ENCODE measurements at regions of chr2 and their contacts with region 1.

Region 1: GRCh38 chr2:9630749-9631483 is at the start of gene YWHAQ:
- DNase-seq: peak; percentile 98
- H3K4me3 Mint-ChIP-seq: peak within 1 kb of the TSS; percentile 97
- H3K27ac Mint-ChIP-seq: peak within 1 kb of the TSS; percentile 95
- H3K4me1 Mint-ChIP-seq: peaks cover 45% of the 10 kb centered on the region
- H3K27me3 Mint-ChIP-seq: no peaks in the 10 kb centered on the region
- total RNA-seq, gene YWHAQ: 495 to 541 TPM

Region 2: GRCh38 chr2:9474361-9474967 is 156.5 kb before region 1 on chr2 and contains the start of gene IAH1:
- CTCF ChIA-PET with region 1: interaction called, 3 read pairs
- POLR2A ChIA-PET with region 1: interaction called, 3 read pairs
- intact Hi-C with region 1: loop called (anchors 2 kb)
- DNase-seq: peak; percentile 77
- H3K4me3 Mint-ChIP-seq: peak within 1 kb of the TSS; percentile 79
- H3K27ac Mint-ChIP-seq: peak within 1 kb of the TSS; percentile 76
- H3K4me1 Mint-ChIP-seq: peaks cover 43% of the 10 kb centered on the region
- H3K27me3 Mint-ChIP-seq: no peaks in the 10 kb centered on the region
- total RNA-seq, gene IAH1: 83.3 to 87.1 TPM

Region 3: DNA sequence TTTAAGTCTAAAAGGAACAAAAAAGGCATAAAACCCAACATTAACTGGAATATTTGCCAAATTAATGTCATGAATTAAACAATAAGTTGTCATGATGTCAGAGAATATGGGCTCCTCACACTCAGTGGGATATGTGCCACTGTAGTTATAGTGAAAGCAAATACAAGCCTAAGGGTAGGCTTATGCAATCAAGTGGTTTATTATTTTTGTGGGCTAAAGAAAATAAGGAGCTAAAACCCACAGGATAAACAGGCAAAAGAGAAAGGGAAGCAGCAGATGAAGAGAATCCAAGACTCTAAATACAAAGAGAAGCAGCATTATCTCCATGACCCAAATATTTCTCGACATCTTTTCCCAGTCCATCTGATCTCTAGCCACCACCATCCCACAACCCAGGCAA is 17.6 kb before region 1 on chr2:
- CTCF ChIA-PET with region 1: interaction called, 14 read pairs
- POLR2A ChIA-PET with region 1: interaction called, 21 read pairs
- intact Hi-C with region 1: loop called (anchors 1 kb)
- DNase-seq: no peak
- H3K4me3 Mint-ChIP-seq: no peak overlapping the region
- H3K27ac Mint-ChIP-seq: no peak overlapping the region
- H3K4me1 Mint-ChIP-seq: peaks cover 90% of the 10 kb centered on the region
- H3K27me3 Mint-ChIP-seq: no peaks in the 10 kb centered on the region

Region 4: GRCh38 chr2:9656270-9656766 is 25.4 kb after region 1 on chr2:
- CTCF ChIA-PET with region 1: interaction called, 3 read pairs
- POLR2A ChIA-PET with region 1: interaction called, 28 read pairs
- intact Hi-C with region 1: loop called (anchors 1 kb)
- DNase-seq: peak; percentile 90
- H3K4me3 Mint-ChIP-seq: peak overlapping the region; percentile 40
- H3K27ac Mint-ChIP-seq: peak overlapping the region; percentile 94
- H3K4me1 Mint-ChIP-seq: peaks cover 43% of the 10 kb centered on the region
- H3K27me3 Mint-ChIP-seq: peaks cover 9% of the 10 kb centered on the region

Region 5: GRCh38 chr2:9753276-9753600 is 122.3 kb after region 1 on chr2:
- CTCF ChIA-PET with region 1: interaction called, 5 read pairs
- POLR2A ChIA-PET with region 1: interaction called, 28 read pairs
- intact Hi-C with region 1: loop called (anchors 1 kb)
- DNase-seq: peak; percentile 90
- H3K4me3 Mint-ChIP-seq: peak overlapping the region; percentile 68
- H3K27ac Mint-ChIP-seq: peak overlapping the region; percentile 91
- H3K4me1 Mint-ChIP-seq: peaks cover 70% of the 10 kb centered on the region
- H3K27me3 Mint-ChIP-seq: no peaks in the 10 kb centered on the region

Region 6: DNA sequence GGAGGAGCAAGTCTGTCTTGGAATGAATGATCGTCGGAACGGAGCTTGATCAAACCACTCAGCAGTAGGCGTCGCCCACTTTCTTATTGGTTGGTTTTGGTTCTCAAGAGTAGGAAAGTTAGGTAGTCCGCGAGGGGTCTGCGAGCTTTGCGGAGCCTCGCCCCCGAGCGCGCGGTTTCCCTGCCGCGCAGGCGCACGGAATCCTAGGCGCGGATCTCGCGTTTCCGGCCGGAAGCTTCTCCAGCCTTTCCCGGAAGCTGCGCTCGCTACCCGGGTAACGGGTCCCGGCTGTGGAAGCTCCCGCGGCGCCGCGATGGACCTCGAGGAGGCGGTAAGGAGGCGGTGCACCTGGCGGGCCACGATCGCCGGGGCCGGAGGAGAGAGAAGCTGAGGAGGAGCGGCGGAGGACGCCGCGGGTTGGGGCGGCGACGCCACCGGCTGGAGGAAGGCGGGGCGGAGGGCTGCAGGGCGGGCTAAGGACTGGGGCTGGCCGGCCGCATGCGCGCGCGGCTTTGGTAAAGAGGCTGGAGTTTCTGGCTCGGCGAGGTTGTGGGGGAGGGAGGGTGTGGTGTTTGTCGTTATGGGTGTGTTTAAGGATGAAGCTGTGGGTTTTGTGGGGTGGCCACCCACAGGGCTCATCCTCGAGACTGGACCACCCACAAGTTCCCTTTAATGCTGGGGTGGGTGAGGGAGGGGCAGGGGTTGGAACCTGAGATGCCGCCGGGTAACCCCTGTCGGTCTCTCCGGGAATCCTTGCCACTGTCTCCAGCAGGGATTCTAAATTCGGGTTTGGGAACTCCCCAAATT is 212.5 kb after region 1 on chr2 and contains the start of gene TAF1B:
- CTCF ChIA-PET with region 1: no interaction called
- POLR2A ChIA-PET with region 1: interaction called, 8 read pairs
- intact Hi-C with region 1: loop called (anchors 1 kb)
- DNase-seq: peak; percentile 92
- H3K4me3 Mint-ChIP-seq: peak within 1 kb of the TSS; percentile 91
- H3K27ac Mint-ChIP-seq: peak within 1 kb of the TSS; percentile 89
- H3K4me1 Mint-ChIP-seq: peaks cover 42% of the 10 kb centered on the region
- H3K27me3 Mint-ChIP-seq: no peaks in the 10 kb centered on the region
- total RNA-seq, gene TAF1B: 32.6 TPM

Region 7: GRCh38 chr2:9909106-9909505 is 278.2 kb after region 1 on chr2:
- CTCF ChIA-PET with region 1: no interaction called
- POLR2A ChIA-PET with region 1: no interaction called
- intact Hi-C with region 1: no loop called
- DNase-seq: no peak
- H3K4me3 Mint-ChIP-seq: no peak overlapping the region
- H3K27ac Mint-ChIP-seq: no peak overlapping the region
- H3K4me1 Mint-ChIP-seq: peaks cover 2% of the 10 kb centered on the region
- H3K27me3 Mint-ChIP-seq: no peaks in the 10 kb centered on the region

Region 8: DNA sequence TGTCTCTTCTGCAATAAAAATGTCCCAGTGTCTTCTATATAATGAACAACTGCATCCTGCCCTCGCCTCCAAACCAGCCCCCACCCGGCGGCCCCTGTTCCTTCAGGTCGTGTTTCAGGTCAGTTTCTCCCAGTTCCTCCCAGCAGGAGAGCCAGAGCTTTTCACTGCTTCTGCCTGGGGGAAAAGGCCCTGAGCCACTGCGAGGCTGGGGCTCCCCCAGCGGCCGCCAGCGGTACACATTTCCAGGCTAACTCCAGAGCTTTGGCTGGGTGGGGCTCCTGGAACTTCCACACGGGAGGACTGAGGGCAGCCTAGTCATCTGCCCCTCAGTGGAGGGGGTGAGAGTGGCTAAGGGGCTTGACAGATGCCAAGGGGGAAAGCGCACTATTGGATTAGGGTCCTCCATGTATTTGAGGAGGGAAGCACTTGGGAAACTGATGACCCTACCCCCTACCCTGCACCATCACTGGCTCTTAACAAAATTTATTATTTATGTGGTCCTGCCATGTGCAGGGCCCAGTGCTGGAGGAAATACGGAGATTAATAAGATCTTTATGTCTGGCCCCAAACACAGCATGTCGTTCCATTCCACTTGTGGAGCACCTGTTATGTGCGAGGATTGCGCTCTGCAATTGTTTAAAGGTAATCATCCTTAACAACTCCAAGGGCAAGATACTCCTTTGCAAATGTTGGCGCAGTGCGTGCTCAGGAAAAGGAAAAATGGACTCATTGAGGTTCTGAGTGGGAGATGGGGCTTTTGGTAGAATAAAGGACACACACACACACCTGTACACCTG is 466.6 kb after region 1 on chr2:
- CTCF ChIA-PET with region 1: no interaction called
- POLR2A ChIA-PET with region 1: no interaction called
- intact Hi-C with region 1: no loop called
- DNase-seq: peak; percentile 50
- H3K4me3 Mint-ChIP-seq: no peak overlapping the region
- H3K27ac Mint-ChIP-seq: no peak overlapping the region
- H3K4me1 Mint-ChIP-seq: no peaks in the 10 kb centered on the region
- H3K27me3 Mint-ChIP-seq: peaks cover 21% of the 10 kb centered on the region

Measured in activated CD4-positive, alpha-beta memory T cell treated with anti-CD3 and anti-CD28 coated beads for 36 hours (primary cell).